A673 (cell line): ENCODE measurements at regions of chr20 and their contacts with region 1.

Region 1: GRCh38 chr20:20452254-20452676 is 84.4 kb downstream of the INSM1 start:
- DNase-seq: peak; percentile 97
- H3K4me3 ChIP-seq: no peak overlapping the region
- H3K27ac ChIP-seq: no peak overlapping the region
- H3K4me1 ChIP-seq: peaks cover 38% of the 10 kb centered on the region
- H3K27me3 ChIP-seq: no peaks in the 10 kb centered on the region
- CTCF ChIP-seq: peak; percentile 39; the same call in 1 of the 2 replicates

Region 2: GRCh38 chr20:20386192-20386591 is 66.1 kb before region 1 on chr20:
- CTCF ChIA-PET with region 1: no interaction called
- POLR2A ChIA-PET with region 1: no interaction called
- intact Hi-C with region 1: no loop called
- DNase-seq: no peak
- H3K4me3 ChIP-seq: no peak overlapping the region
- H3K27ac ChIP-seq: no peak overlapping the region
- H3K4me1 ChIP-seq: no peaks in the 10 kb centered on the region
- H3K27me3 ChIP-seq: no peaks in the 10 kb centered on the region
- CTCF ChIP-seq: no peak

Region 3: DNA sequence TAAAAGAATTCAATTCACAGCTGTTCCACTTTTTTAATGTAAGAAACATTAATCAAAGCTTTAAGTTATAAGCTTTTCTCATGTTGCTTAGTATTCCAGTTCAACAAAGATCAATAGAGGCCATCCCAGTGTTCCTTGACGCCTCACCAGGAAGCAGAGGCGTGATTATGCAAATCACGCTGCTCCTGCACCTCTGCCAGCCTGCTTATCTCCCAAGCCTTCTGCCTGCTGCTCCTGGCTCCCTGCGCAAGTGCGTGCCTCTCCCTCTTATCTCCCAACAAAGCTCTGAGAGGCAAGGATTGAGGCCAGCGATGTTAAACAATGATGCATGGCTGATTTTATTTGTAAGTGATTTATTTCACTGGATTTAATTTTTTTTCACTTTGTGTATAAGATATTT is 41.6 kb before region 1 on chr20:
- CTCF ChIA-PET with region 1: no interaction called
- POLR2A ChIA-PET with region 1: no interaction called
- intact Hi-C with region 1: loop called (anchors 5 kb)
- DNase-seq: peak; percentile 76
- H3K4me3 ChIP-seq: no peak overlapping the region
- H3K27ac ChIP-seq: no peak overlapping the region
- H3K4me1 ChIP-seq: peaks cover 63% of the 10 kb centered on the region
- H3K27me3 ChIP-seq: no peaks in the 10 kb centered on the region
- CTCF ChIP-seq: no peak

Region 4: GRCh38 chr20:20463933-20464374 is 11.7 kb after region 1 on chr20:
- CTCF ChIA-PET with region 1: interaction called, 10 read pairs
- POLR2A ChIA-PET with region 1: interaction called, 4 read pairs
- intact Hi-C with region 1: no loop called
- DNase-seq: peak; percentile 90
- H3K4me3 ChIP-seq: no peak overlapping the region
- H3K27ac ChIP-seq: peak overlapping the region; percentile 36
- H3K4me1 ChIP-seq: peaks cover 43% of the 10 kb centered on the region
- H3K27me3 ChIP-seq: no peaks in the 10 kb centered on the region
- CTCF ChIP-seq: no peak

Region 5: DNA sequence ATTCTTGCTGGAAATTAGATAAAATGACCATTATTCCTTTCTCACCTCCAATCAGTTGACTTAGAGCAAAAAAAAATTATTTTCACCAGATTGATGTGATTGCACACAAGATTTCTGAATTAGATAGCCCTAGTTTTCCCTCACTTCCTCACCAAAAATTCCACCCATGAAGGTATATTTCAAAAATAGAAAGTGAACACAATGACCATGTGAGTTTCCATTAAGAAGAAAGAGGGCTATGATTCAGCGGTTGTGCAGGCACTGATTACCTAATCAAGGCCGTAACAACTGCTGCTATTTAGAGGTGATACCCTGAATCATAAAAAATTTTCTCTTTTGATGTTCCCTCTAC is 279.7 kb after region 1 on chr20:
- CTCF ChIA-PET with region 1: no interaction called
- POLR2A ChIA-PET with region 1: no interaction called
- intact Hi-C with region 1: no loop called
- DNase-seq: no peak
- H3K4me3 ChIP-seq: no peak overlapping the region
- H3K27ac ChIP-seq: no peak overlapping the region
- H3K4me1 ChIP-seq: peaks cover 36% of the 10 kb centered on the region
- H3K27me3 ChIP-seq: no peaks in the 10 kb centered on the region
- CTCF ChIP-seq: no peak